ENCODE measurements at regions of chr1 and their contacts with region 1.

Region 1: DNA sequence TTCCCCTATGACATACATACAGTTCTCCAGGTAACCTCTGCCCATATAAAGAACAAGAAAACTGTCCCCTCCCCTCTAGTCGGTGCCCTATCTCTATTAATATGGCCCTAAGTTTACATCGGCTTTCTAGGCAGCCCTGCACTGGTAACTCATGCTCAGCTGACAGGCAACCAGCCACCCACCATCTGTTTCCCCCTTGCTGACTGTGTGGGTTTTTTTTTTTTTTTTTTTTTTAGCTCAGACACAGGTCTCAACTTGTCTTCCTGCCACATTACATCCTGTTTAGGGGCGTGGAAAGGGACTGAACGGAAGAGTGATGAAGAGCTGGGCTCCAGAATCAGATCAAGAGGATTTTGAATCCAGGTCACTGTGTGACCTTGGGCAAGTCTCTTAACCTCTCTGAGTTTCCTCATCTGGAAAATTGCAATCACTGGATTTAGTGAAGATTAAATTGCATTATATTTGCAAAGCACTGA is 14.0 kb downstream of the LAPTM5 start:
- DNase-seq: peak; percentile 82
- H3K4me3 Mint-ChIP-seq: peak overlapping the region; percentile 56
- H3K27ac Mint-ChIP-seq: peak overlapping the region; percentile 91
- H3K4me1 Mint-ChIP-seq: peaks cover 99% of the 10 kb centered on the region
- H3K27me3 Mint-ChIP-seq: no peaks in the 10 kb centered on the region

Region 2: GRCh38 chr1:30727824-30728223 is 15.8 kb before region 1 on chr1:
- CTCF ChIA-PET with region 1: interaction called, 13 read pairs
- POLR2A ChIA-PET with region 1: interaction called, 18 read pairs
- DNase-seq: no peak
- H3K4me3 Mint-ChIP-seq: no peak overlapping the region
- H3K27ac Mint-ChIP-seq: no peak overlapping the region
- H3K4me1 Mint-ChIP-seq: peaks cover 3% of the 10 kb centered on the region
- H3K27me3 Mint-ChIP-seq: no peaks in the 10 kb centered on the region

Region 3: GRCh38 chr1:30756545-30757195 is 13.0 kb after region 1 on chr1:
- CTCF ChIA-PET with region 1: interaction called, 41 read pairs
- POLR2A ChIA-PET with region 1: interaction called, 341 read pairs
- DNase-seq: peak; percentile 84
- H3K4me3 Mint-ChIP-seq: peak overlapping the region; percentile 95
- H3K27ac Mint-ChIP-seq: peak overlapping the region; percentile 93
- H3K4me1 Mint-ChIP-seq: peaks cover 87% of the 10 kb centered on the region
- H3K27me3 Mint-ChIP-seq: no peaks in the 10 kb centered on the region

Region 4: GRCh38 chr1:30816211-30817076 is 72.8 kb after region 1 on chr1:
- CTCF ChIA-PET with region 1: no interaction called
- POLR2A ChIA-PET with region 1: no interaction called
- DNase-seq: no peak
- H3K4me3 Mint-ChIP-seq: no peak overlapping the region
- H3K27ac Mint-ChIP-seq: no peak overlapping the region
- H3K4me1 Mint-ChIP-seq: no peaks in the 10 kb centered on the region
- H3K27me3 Mint-ChIP-seq: peaks cover 48% of the 10 kb centered on the region

Measured in activated CD4-positive, alpha-beta memory T cell treated with anti-CD3 and anti-CD28 coated beads, Interleukin-2, amount 10 ng/mL, durations not matched to agents 7 days and 5 days (primary cell).